IMR-90 (cell line): ENCODE measurements at regions of chr7 and their contacts with region 1.

Region 1: GRCh38 chr7:147400221-147400689 is 1190.3 kb upstream of the C7orf33 start:
- DNase-seq: peak; percentile 70
- ATAC-seq: peak; percentile 95
- H3K4me3 ChIP-seq: peak overlapping the region; percentile 12; the same call in 1 of the 2 replicates
- H3K27ac ChIP-seq: peak overlapping the region; percentile 55; the same call in 1 of the 2 replicates
- H3K4me1 ChIP-seq: no peaks in the 10 kb centered on the region
- H3K27me3 ChIP-seq: no peaks in the 10 kb centered on the region
- CTCF ChIP-seq: no peak
- POLR2A ChIP-seq: no peak
- RAD21 ChIP-seq: no peak

Region 2: DNA sequence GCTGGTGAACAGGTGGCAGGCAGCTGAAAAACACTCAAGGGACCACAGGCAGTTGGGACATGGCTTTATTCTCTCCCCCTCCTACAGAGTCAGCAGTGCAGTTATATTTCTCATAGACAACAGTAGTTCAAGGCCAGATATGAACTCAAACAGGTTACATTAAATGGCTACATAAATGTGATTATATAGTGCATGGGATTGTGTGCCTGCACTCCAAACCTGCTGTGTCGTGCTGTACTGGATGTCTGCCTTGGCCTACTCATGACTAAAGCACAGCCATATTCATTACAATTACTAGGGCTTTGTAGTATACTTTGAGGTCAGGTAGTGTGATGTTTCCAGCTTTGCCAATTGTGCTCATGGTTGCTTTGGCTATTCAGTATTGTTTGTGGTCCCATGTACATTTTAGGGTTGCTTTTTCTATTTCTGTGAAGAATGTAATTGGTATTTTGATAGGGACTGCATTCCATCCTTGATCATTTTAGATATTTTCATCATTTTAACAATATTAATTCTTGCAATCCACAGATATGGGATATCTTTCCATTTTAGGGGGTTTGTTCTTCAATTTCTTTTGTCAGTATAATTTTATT is 890.1 kb before region 1 on chr7:
- CTCF ChIA-PET with region 1: no interaction called
- POLR2A ChIA-PET with region 1: interaction called, 11 read pairs
- dilution Hi-C with region 1: no loop called
- in situ Hi-C with region 1: no loop called
- intact Hi-C with region 1: no loop called
- DNase-seq: no peak
- ATAC-seq: no peak
- H3K4me3 ChIP-seq: no peak overlapping the region
- H3K27ac ChIP-seq: no peak overlapping the region
- H3K4me1 ChIP-seq: no peaks in the 10 kb centered on the region
- H3K27me3 ChIP-seq: no peaks in the 10 kb centered on the region
- CTCF ChIP-seq: no peak
- POLR2A ChIP-seq: no peak
- RAD21 ChIP-seq: no peak

Region 3: GRCh38 chr7:147547249-147547897 is 147.1 kb after region 1 on chr7:
- CTCF ChIA-PET with region 1: no interaction called
- POLR2A ChIA-PET with region 1: no interaction called
- dilution Hi-C with region 1: no loop called
- in situ Hi-C with region 1: no loop called
- intact Hi-C with region 1: no loop called
- DNase-seq: peak; percentile 9
- ATAC-seq: no peak
- H3K4me3 ChIP-seq: no peak overlapping the region
- H3K27ac ChIP-seq: no peak overlapping the region
- H3K4me1 ChIP-seq: no peaks in the 10 kb centered on the region
- H3K27me3 ChIP-seq: no peaks in the 10 kb centered on the region
- CTCF ChIP-seq: peak; percentile 13; the same call in 1 of the 2 replicates
- POLR2A ChIP-seq: no peak
- RAD21 ChIP-seq: peak; percentile 32